Common myeloid progenitor, CD34-positive (primary cell): ENCODE measurements at regions of chr16 and their contacts with region 1.

Region 1: GRCh38 chr16:75110637-75111513 is 5.7 kb downstream of the LDHD start:
- DNase-seq: peak; percentile 86 to 91 (median 91)
- H3K4me3 ChIP-seq: peak overlapping the region in 3 of 7 experiments; percentile 8 to 59 (median 43)
- H3K27ac ChIP-seq: peak overlapping the region; percentile 20 to 61
- H3K4me1 ChIP-seq: peaks cover 5 to 90% (median 83%) of the 10 kb centered on the region in 4 experiments
- H3K27me3 ChIP-seq: no peaks in the 10 kb centered on the region

Region 2: GRCh38 chr16:74991593-74992403 is 119.1 kb before region 1 on chr16:
- CTCF ChIA-PET with region 1: interaction called, 105 read pairs
- POLR2A ChIA-PET with region 1: interaction called, 3 read pairs
- DNase-seq: peak; percentile 40 to 64 (median 44)
- H3K4me3 ChIP-seq: peak overlapping the region in 3 of 7 experiments; percentile 27 to 52 (median 38)
- H3K27ac ChIP-seq: peak overlapping the region in 1 of 2 experiments; percentile 55
- H3K4me1 ChIP-seq: peaks cover 5 to 20% (median 13%) of the 10 kb centered on the region in 4 experiments
- H3K27me3 ChIP-seq: no peaks in the 10 kb centered on the region

Region 3: GRCh38 chr16:75043175-75043895 is 67.5 kb before region 1 on chr16:
- CTCF ChIA-PET with region 1: interaction called, 53 read pairs
- POLR2A ChIA-PET with region 1: interaction called, 5 read pairs
- DNase-seq: peak; percentile 96 to 100 (median 98)
- H3K4me3 ChIP-seq: peak overlapping the region in 3 of 7 experiments; percentile 49 to 63 (median 56)
- H3K27ac ChIP-seq: peak overlapping the region; percentile 90 to 95
- H3K4me1 ChIP-seq: peaks cover 26 to 85% (median 73%) of the 10 kb centered on the region in 4 experiments
- H3K27me3 ChIP-seq: no peaks in the 10 kb centered on the region

Region 4: DNA sequence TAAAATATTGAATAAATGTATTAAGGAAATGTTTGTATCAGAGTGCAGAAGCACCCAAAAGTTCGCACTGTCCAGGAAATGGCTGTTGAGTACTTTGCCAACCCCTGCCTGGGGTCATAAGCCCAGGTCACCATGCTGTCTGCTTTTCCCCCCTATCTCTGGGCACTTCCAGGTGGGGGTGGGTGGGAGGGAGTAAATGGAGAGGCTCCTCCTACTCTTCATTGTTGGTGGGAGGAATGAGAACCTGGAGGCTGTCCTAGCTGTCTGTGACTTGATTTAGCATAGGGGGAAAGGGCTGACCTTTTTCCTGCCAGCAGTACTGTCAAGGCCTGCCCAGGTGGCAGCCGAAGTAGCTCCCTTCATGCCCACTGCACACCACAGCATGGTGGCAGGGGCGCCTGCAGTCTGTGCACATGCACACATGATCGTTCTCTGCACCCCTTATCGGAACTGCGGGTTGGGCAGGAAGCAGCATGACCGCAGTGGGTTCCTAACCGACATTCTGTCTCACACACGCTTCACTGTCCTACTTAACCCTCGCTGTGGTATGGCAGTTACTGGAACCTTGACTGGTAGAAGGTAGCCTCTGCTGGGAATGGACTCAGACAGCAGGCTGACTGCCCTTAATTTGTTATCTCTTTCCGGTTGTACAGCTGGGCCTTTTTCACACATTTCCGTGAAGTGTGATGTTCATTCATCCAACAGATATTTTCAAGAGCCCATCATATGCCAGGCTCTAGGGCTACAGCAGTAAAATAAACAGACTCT is 35.8 kb before region 1 on chr16:
- CTCF ChIA-PET with region 1: interaction called, 58 read pairs
- POLR2A ChIA-PET with region 1: interaction called, 28 read pairs
- DNase-seq: peak; percentile 97 to 100 (median 99)
- H3K4me3 ChIP-seq: peak overlapping the region in 4 of 7 experiments; percentile 2 to 48 (median 22)
- H3K27ac ChIP-seq: peak overlapping the region; percentile 61 to 80
- H3K4me1 ChIP-seq: peaks cover 20 to 97% (median 89%) of the 10 kb centered on the region in 4 experiments
- H3K27me3 ChIP-seq: no peaks in the 10 kb centered on the region

Region 5: GRCh38 chr16:75099756-75100602 is 10.9 kb before region 1 on chr16:
- CTCF ChIA-PET with region 1: interaction called, 85 read pairs
- POLR2A ChIA-PET with region 1: interaction called, 11 read pairs
- DNase-seq: peak in 2 of 3 donors; percentile 60 to 62
- H3K4me3 ChIP-seq: peak overlapping the region in 4 of 7 experiments; percentile 8 to 30 (median 22)
- H3K27ac ChIP-seq: peak overlapping the region in 1 of 2 experiments; percentile 15
- H3K4me1 ChIP-seq: peaks cover 5 to 90% (median 79%) of the 10 kb centered on the region in 4 experiments
- H3K27me3 ChIP-seq: no peaks in the 10 kb centered on the region

Region 6: GRCh38 chr16:75188832-75189510 is 78.1 kb after region 1 on chr16:
- CTCF ChIA-PET with region 1: no interaction called
- POLR2A ChIA-PET with region 1: no interaction called
- DNase-seq: no peak
- H3K4me3 ChIP-seq: no peak overlapping the region
- H3K27ac ChIP-seq: no peak overlapping the region
- H3K4me1 ChIP-seq: no peaks in the 10 kb centered on the region
- H3K27me3 ChIP-seq: peaks cover 0 to 36% (median 5%) of the 10 kb centered on the region in 5 experiments